ENCODE measurements at regions of chr1 and their contacts with region 1.

Region 1: DNA sequence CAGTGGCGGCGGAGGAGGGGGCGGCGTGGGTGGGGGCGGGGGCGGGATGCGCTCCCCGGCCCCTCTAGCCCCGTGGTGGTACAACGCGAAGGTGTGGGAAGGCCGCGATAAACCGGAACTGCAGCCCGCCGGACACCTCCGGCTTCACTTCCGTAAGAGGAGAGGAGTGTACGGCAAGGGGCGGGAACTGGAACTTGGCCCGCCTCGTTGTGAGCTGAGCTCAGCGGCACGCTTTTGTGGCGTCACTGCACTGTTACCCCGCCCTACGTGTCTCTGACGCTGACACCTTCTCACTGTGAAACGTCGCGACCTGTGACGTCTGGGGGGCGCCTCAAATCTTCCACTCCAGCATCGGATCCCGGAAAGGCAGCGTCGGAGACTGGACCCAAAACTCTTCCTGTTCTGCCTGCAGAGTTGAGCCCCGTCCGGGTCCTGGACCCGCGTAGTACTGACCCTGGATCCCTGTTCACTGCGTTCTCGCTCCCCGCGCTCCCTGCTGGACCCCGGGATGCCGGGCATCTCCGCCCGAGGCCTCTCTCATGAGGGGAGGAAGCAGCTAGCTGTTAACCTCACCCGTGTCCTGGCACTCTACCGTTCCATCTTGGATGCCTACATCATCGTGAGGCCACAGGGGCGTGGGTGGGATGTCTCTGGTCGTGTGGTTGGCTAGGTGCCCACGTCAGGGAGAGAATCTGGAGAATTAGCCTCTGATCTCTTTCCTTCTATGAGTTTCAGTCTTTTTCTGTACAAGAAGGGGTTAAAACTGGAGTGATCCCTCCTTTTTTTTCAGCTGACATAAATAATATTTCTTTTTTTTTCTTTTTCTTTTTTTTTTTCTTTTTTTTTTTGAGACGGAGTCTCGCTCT is at the start of gene ISG20L2:
- H3K4me3 ChIP-seq: peak within 1 kb of the TSS; percentile 85
- H3K27ac ChIP-seq: peak within 1 kb of the TSS; percentile 72
- H3K4me1 ChIP-seq: peaks cover 7% of the 10 kb centered on the region
- CTCF ChIP-seq: peak; percentile 63; the same call in 1 of the 2 replicates

Region 2: GRCh38 chr1:156659994-156660751 is 68.7 kb before region 1 on chr1:
- CTCF ChIA-PET with region 1: interaction called, 48 read pairs
- POLR2A ChIA-PET with region 1: interaction called, 12 read pairs
- H3K4me3 ChIP-seq: peak overlapping the region; percentile 38
- H3K27ac ChIP-seq: peak overlapping the region; percentile 76
- H3K4me1 ChIP-seq: peaks cover 9% of the 10 kb centered on the region; the same call in 1 of the 2 replicates
- CTCF ChIP-seq: peak; percentile 100

Region 3: DNA sequence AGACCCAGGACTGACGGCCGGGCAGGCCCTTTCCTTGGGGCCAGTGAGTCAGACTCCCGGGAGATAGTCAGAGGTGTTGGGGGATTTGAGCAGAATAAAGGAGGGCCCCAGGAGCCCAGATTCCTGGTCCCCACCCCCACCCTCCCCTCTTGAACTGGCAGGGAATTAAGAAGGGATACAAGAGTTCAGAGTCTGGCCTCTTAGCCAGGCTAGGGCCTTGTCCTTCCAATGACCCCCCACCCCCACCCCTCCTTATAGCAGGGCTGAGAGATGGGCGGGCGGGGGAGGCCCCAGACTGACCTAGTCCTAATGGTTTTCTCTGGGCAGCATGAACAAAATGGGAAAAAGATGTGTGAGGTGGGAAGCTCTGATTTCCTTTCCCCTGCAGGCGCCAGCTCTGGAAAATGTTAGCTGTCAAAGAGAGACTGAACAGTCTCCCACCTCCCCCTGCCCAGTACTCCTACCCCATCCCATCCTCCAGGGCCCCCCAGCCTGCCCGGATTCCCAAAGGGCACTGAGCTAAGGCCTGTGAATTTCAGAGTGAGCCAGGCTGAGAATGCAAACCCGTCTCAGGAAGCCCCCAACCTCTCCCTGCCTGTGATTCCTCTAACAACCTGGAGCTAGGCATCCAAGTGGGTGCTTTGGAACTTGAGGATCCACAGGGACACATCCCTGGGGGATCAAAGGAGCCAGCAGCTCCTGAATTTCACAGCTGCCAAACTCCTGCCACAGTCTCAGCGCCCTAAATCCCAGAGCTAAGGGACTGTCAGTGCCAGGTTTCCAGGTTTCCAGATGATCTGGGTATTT is 17.6 kb before region 1 on chr1:
- CTCF ChIA-PET with region 1: interaction called, 65 read pairs
- POLR2A ChIA-PET with region 1: interaction called, 10 read pairs
- H3K4me3 ChIP-seq: no peak overlapping the region
- H3K27ac ChIP-seq: no peak overlapping the region
- H3K4me1 ChIP-seq: peaks cover 3% of the 10 kb centered on the region; the same call in 1 of the 2 replicates
- CTCF ChIP-seq: no peak

Region 4: GRCh38 chr1:156767101-156767878 is 38.5 kb after region 1 on chr1 and contains the start of gene PRCC:
- CTCF ChIA-PET with region 1: interaction called, 31 read pairs
- POLR2A ChIA-PET with region 1: interaction called, 29 read pairs
- H3K4me3 ChIP-seq: peak within 1 kb of the TSS; percentile 92
- H3K27ac ChIP-seq: peak within 1 kb of the TSS; percentile 94
- H3K4me1 ChIP-seq: peaks cover 6% of the 10 kb centered on the region; the same call in 1 of the 2 replicates
- CTCF ChIP-seq: peak; percentile 60

Region 5: DNA sequence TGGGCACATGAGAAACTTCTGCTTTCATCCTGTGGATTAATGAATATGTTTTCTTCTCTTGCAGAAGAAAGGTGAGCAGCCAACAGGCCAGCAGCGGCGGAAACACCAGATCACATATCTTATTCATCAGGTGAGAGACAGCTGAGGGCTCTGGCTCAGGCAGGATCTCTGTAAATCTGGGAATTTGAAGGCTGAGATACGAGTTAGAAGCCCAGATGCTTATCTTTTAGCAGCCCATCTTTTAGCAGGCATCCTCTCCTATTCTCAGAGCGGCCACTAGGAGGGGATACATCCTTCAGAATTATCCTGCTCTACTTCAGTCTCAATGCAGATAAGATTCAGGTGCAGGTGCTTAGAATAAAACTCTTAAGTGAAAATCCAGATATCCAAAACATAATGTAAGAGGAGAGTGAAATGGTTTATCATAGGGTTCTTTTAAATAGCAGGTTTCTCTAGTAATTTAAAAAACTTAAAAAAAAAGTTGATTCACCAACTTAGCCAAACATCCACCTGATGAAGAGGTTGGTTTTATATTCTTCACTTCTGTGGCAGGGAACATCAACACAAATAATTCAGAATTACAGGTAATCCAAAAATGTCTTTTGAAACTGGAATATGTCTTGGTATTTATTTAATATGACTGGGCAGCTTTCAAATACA is 68.5 kb after region 1 on chr1:
- CTCF ChIA-PET with region 1: interaction called, 29 read pairs
- POLR2A ChIA-PET with region 1: interaction called, 3 read pairs
- H3K4me3 ChIP-seq: no peak overlapping the region
- H3K27ac ChIP-seq: no peak overlapping the region
- H3K4me1 ChIP-seq: no peaks in the 10 kb centered on the region
- CTCF ChIP-seq: 0 out of 2 replicates have a peak, but pooled peaks have one; percentile 47

Region 6: DNA sequence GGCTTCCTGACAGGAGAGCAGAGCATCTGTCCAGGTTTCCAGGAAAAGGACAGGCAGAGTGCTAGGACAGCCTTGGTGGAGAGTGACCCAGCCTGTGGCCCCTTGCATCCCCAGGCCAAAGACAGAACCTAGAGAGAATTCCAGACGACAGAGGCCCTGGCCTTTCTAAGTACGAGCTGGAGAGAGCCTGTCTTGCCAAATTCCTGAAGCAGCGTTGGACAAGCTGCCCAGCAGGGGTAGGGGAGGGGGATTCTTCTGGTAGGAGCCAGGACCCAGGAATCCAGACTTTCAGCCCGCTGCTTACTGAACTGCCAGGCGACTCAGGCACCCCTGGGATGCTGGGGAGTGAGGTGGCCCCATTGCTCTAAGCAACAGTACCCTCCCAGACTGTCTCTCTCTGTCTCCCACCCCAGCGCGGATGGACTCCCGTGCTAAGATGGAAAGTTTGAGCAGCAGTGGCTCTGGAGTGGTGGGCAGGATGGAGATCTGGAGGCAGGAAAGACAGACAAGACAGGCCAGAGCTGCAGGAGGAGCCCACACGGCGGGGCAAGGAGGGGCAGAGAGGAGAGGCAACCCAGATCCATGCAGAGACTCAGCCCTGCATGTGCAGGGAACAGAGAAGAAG is 155.8 kb after region 1 on chr1:
- CTCF ChIA-PET with region 1: interaction called, 79 read pairs
- POLR2A ChIA-PET with region 1: interaction called, 4 read pairs
- H3K4me3 ChIP-seq: no peak overlapping the region
- H3K27ac ChIP-seq: no peak overlapping the region
- H3K4me1 ChIP-seq: no peaks in the 10 kb centered on the region
- CTCF ChIP-seq: no peak

Measured in HEK293 (cell line).